A549 (cell line): ENCODE measurements at regions of chr17 and their contacts with region 1.

Region 1: DNA sequence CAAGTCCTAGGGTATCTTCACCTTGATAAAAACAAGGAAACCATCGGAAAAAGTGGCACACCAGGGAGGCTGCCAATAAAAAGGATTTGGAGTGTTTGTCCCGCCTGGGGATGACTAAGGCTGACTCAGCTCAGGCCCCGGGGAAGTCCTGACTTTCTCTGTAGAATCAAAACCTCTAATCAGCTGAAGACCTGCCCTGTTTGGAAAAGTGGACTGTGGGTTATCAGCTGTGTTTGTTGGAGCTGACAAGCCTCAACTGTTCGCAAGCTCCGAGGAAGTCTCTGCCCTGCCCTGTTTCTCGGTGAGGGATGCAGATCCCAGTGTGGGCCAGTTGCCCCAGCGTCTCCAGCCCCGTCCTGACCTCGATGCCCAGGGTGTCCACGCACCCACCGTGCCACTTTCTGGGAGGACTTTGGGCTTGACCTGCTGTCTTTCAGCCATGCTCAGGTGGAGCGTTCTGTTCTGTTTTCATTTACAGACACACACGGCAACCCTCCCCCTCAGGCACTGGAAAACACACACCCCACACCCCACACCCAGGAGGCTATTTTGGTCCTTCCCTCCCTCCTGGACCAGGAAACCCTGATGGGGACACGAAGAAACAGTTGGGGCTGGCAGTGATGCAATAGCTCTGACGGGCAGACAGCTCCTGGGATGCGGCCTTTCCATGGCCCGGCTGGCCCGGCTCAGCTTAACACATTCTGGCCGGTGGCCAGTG is 27.6 kb upstream of the PITPNA start:
- DNase-seq: peak; percentile 90 to 99
- ATAC-seq: peak; percentile 88 to 93
- H3K4me3 ChIP-seq: peak overlapping the region; percentile 22; the same call in 1 of the 3 replicates
- H3K27ac ChIP-seq: peak overlapping the region; percentile 76 to 84
- H3K4me1 ChIP-seq: peaks cover 42% of the 10 kb centered on the region
- CTCF ChIP-seq: no peak
- EP300 ChIP-seq: no peak
- POLR2A ChIP-seq: no peak
- RAD21 ChIP-seq: no peak; a peak in 2 of 5 replicates

Region 2: DNA sequence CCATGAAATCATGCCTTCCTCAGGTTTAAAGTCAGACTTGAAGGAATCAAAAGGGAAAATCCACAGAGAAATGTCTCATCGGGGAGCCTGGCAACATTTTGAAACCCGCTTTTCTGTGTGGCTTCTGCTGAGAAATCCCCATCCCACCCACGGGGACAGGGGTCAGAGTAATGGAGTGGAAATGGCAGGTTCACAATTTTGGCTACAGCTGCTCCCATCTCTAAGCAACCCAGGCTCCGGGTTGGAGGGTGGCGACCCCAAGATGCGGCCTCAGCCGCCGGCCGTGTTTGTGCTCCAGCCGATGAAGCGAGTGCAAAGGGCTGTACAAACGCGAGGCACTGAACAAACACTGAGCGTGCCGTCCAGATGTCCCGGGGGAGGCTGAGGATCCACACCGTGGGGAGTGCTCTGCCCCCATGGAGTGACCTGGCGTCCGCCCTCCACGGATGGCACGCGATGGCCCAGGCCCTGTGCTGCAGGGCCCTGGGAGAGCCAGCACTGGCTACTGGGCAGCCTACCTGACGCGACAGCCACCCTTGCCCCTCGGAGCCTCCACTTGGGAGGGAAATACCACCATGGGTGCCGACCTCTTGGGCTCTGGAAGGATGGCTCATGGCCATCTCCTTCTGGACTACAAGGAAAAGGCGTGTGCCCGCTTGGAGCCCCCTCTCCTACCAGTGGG is 16.3 kb after region 1 on chr17:
- CTCF ChIA-PET with region 1: interaction called, 10 read pairs
- POLR2A ChIA-PET with region 1: no interaction called
- DNase-seq: no peak
- ATAC-seq: peak in 1 of 2 experiments; percentile 28; a peak in 3 of 6 replicates
- H3K4me3 ChIP-seq: no peak overlapping the region
- H3K27ac ChIP-seq: no peak overlapping the region
- H3K4me1 ChIP-seq: no peaks in the 10 kb centered on the region
- CTCF ChIP-seq: no peak
- EP300 ChIP-seq: no peak
- POLR2A ChIP-seq: no peak
- RAD21 ChIP-seq: no peak

Region 3: DNA sequence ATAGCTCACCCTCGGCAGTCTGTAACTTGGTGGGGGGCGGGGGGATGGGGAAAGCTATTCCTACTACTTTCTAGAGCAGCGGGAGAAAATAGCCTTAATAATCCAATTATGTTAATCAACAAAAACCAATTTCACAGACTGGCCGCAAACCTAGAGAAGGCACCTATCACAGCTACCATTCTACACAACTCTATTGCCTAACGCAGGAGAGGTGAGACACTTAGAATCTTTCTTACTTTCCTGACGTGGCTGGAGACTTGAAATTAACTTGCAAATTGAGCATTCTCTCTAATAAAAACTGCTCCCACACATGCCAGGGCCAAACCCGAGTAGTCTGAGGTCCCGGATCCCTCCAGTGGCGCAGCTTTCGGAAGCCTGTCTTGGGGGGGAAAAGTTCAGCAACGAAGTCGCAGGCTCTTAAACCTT is 712.6 kb after region 1 on chr17:
- CTCF ChIA-PET with region 1: no interaction called
- POLR2A ChIA-PET with region 1: no interaction called
- DNase-seq: no peak
- ATAC-seq: peak; percentile 12 to 13; a peak in 5 of 6 replicates
- H3K4me3 ChIP-seq: peak overlapping the region; percentile 75
- H3K27ac ChIP-seq: peak overlapping the region; percentile 97 to 99
- H3K4me1 ChIP-seq: peaks cover 13% of the 10 kb centered on the region; the same call in 2 of the 3 replicates
- CTCF ChIP-seq: no peak
- EP300 ChIP-seq: no peak
- POLR2A ChIP-seq: no peak
- RAD21 ChIP-seq: no peak

Region 4: GRCh38 chr17:2336215-2336851 is 746.1 kb after region 1 on chr17 and contains the start of gene TSR1:
- CTCF ChIA-PET with region 1: no interaction called
- POLR2A ChIA-PET with region 1: no interaction called
- DNase-seq: peak; percentile 94 to 99
- ATAC-seq: peak; percentile 92 to 97
- H3K4me3 ChIP-seq: peak within 1 kb of the TSS; percentile 99
- H3K27ac ChIP-seq: peak within 1 kb of the TSS; percentile 94 to 99
- H3K4me1 ChIP-seq: peaks cover 20% of the 10 kb centered on the region
- CTCF ChIP-seq: peak; percentile 38
- EP300 ChIP-seq: no peak
- POLR2A ChIP-seq: peak; percentile 83
- RAD21 ChIP-seq: peak in 1 of 2 experiments; percentile 19; a peak in 2 of 5 replicates
- polyA plus RNA-seq, gene TSR1: 38.3 and 45.7 TPM in 2 replicates